Colonic mucosa (tissue), 4 donors: ENCODE measurements at regions of chr15 and their contacts with region 1.

Region 1: DNA sequence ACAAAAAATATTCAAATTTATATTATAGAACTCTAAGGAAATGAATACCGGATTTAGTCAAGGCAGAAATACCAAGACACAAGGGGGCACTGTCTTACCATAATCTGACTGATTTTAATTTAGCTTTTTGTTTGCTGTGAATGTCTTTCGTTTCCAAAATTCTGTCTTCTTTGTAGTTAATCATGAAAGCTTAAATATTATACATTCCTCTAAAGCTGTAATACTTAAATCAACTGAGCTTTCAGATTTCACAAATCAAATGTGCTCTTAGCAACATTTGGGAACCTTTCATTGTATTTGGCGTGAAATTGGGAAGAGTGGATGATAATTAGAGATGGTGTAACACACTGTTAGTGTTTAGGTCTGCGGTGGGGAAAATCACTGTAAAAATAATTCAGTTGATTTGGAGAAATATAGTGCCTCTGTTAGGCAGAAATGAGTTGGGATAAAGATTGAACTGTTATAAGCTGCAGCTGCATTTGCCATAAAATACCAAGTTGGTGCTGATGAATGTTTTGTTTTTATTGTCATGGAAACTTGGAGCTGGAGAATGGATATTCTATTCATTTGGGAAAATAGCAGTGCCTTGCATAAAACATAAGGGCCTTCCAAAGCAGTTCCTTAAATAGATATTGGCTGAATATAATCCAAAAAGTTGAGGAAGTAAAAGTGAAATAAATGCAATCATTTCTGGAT is 228.2 kb downstream of the TCF12 start:
- DNase-seq: peak; percentile 41
- H3K4me3 ChIP-seq: no peak overlapping the region
- H3K27ac ChIP-seq: no peak overlapping the region
- H3K4me1 ChIP-seq: peaks cover 3% of the 10 kb centered on the region
- H3K27me3 ChIP-seq: no peaks in the 10 kb centered on the region
- CTCF ChIP-seq: peak; percentile 65

Region 2: GRCh38 chr15:57031605-57032004 is 115.0 kb before region 1 on chr15:
- intact Hi-C with region 1: no loop called
- DNase-seq: no peak
- H3K4me3 ChIP-seq: no peak overlapping the region
- H3K27ac ChIP-seq: no peak overlapping the region
- H3K4me1 ChIP-seq: no peaks in the 10 kb centered on the region
- H3K27me3 ChIP-seq: no peaks in the 10 kb centered on the region
- CTCF ChIP-seq: no peak

Region 3: DNA sequence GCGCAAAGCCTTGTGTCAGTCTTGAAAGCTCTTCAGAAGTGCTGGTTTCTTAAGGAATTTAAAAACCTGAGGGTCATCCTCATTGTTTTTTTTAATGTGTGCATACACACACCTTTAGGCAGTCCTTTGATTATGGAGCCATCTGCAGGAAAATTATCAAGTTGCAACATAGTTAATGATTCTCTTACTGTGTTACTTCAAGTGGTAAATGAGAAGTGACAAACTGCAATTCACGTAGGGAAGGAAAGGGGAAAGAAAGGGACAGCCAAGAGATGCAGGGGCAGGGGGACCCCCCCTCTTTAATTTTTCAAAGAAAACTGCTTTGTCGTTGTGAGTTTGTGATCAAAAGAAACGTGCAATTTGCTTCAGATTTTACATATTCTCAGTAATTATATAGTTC is 67.2 kb after region 1 on chr15:
- intact Hi-C with region 1: loop called (anchors 2 kb)
- DNase-seq: no peak
- H3K4me3 ChIP-seq: no peak overlapping the region
- H3K27ac ChIP-seq: no peak overlapping the region
- H3K4me1 ChIP-seq: no peaks in the 10 kb centered on the region
- H3K27me3 ChIP-seq: no peaks in the 10 kb centered on the region
- CTCF ChIP-seq: peak; percentile 39

Region 4: GRCh38 chr15:57235873-57236272 is 89.2 kb after region 1 on chr15:
- intact Hi-C with region 1: no loop called
- DNase-seq: no peak
- H3K4me3 ChIP-seq: no peak overlapping the region
- H3K27ac ChIP-seq: no peak overlapping the region
- H3K4me1 ChIP-seq: no peaks in the 10 kb centered on the region
- H3K27me3 ChIP-seq: no peaks in the 10 kb centered on the region
- CTCF ChIP-seq: no peak

Region 5: DNA sequence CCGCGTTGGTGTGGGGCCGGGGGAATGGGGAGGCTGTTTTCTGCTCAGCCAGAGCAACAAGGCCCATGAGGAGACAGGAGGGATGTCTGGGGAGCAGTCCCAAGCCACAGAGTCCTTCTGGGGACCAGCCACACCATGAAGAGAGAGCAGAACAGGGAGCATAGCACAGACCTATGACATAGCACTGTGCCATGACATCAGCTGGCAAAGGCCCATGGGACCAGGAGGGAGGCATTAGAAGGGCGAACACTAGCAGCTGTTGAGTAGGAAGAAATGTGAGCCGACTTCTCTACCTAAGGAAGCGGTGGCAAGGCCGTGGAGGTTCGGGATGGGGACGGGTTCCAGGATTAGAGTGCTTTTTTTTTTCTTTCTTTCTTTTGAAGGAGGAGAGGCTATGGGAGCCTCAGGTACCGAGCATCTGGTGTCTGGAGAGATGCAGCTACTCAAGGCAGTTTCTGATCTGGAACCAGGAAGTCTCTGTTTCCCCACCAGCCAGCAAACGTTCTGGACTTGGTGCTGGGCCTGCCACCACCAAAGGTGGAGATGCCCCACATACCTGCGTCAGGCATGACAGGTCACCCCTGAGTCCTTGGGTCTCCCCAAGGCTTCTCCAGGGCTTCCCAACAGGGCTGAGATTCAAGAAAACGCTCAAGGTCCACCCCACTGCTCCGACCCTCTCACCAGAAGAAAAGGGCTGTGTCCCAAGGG is 152.3 kb after region 1 on chr15:
- intact Hi-C with region 1: no loop called
- DNase-seq: no peak
- H3K4me3 ChIP-seq: no peak overlapping the region
- H3K27ac ChIP-seq: no peak overlapping the region
- H3K4me1 ChIP-seq: no peaks in the 10 kb centered on the region
- H3K27me3 ChIP-seq: no peaks in the 10 kb centered on the region
- CTCF ChIP-seq: no peak

Region 6: DNA sequence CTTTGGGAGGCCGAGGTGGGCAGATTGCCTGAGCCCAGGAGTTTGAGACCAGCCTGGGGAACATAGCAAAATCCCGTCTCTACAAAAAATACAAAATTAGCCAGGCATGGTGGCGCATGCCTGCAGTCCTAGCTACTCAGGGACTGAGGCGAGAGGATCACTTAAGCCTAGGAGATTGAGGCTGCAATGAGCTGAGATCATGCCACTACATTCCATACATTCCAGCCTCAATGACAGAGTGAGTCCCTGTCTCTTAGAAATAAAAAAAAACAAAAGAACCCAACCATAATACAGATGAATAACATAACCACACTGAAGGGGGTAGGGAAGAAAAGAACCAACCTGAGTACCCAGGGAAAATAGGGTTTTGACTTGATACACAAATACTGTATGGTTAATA is 210.0 kb after region 1 on chr15:
- intact Hi-C with region 1: no loop called
- DNase-seq: no peak
- H3K4me3 ChIP-seq: no peak overlapping the region
- H3K27ac ChIP-seq: no peak overlapping the region
- H3K4me1 ChIP-seq: no peaks in the 10 kb centered on the region
- H3K27me3 ChIP-seq: no peaks in the 10 kb centered on the region
- CTCF ChIP-seq: no peak